AG04449 (cell line): ENCODE measurements at regions of chr21 and their contacts with region 1.

Region 1: DNA sequence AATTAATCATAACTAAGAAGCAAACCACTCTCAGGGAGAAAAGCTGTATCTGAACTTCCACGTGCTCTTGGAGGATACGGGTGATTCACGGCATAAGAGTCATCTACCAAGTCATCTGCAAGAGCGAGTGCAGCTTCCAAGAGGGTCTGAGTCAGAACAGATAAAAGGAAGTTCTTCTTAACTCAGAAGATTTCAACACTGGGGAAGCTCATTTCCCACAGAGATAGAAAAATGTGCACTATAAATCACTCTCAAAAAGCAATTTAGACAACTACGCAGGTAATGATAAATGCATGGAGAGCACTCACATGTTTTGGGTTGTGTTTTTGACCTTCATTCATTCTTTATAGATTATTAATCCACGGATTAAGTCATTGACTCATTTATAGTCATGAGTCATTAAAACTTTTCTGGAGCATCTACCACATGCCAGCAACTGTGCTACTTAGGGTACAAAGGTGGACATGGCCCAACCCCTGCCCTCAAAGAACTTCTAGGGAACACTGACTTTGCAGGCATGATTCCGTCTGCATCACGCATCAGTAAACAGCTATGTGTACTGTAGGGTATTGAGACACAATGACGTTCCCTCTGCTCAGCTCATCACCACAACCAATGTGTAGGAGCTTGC is 20.8 kb downstream of the KCNJ15 start:
- DNase-seq: peak; percentile 96
- H3K4me3 ChIP-seq: no peak overlapping the region
- CTCF ChIP-seq: no peak

Region 2: DNA sequence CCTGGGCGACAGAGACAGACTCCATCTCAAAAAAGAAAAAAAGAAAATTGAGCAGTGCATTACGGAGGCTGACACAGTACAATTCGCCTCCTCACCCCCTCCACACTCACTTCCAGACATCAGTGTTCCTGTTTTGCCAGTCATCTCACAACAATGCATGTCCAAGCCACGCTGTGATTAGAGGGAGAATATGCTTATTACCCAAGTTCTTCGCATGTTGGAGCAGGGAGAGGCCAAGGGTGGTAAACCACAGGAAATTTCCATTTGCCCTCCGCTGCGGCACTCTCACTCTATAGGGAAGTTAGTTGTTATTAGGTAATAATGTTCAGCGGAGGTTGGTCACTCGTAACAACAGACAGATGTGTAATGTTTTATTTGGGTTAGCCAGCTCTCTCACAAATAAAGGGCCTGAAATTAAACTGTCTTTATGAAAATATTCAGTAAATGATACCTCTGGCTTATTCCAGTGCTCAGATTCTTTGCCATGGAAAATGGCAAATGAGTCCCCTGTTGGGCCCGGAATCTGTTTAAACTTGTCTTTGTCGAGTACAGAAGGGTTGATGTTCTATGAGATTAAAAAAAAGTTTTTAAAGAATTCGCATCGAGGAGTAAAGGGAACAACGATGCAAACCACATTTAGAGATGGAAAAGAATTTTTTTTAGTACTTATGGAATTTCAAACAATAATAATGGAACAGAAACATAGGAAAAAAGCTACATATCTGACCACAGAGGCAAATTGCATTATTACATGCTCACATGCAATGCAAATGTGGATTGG is 12.3 kb after region 1 on chr21:
- CTCF ChIA-PET with region 1: interaction called, 4 read pairs
- POLR2A ChIA-PET with region 1: interaction called, 11 read pairs
- DNase-seq: peak; percentile 96
- H3K4me3 ChIP-seq: no peak overlapping the region
- CTCF ChIP-seq: no peak